ENCODE measurements at regions of chr1 and their contacts with region 1.

Region 1: GRCh38 chr1:115706587-115707425 is 61.7 kb downstream of the CASQ2 start:
- DNase-seq: no peak
- ATAC-seq: peak; percentile 88
- H3K4me3 Mint-ChIP-seq: no peak overlapping the region
- H3K27ac Mint-ChIP-seq: no peak overlapping the region
- H3K4me1 Mint-ChIP-seq: no peaks in the 10 kb centered on the region; the same call in 1 of the 2 replicates
- H3K27me3 Mint-ChIP-seq: no peaks in the 10 kb centered on the region
- CTCF ChIP-seq: peak; percentile 75

Region 2: DNA sequence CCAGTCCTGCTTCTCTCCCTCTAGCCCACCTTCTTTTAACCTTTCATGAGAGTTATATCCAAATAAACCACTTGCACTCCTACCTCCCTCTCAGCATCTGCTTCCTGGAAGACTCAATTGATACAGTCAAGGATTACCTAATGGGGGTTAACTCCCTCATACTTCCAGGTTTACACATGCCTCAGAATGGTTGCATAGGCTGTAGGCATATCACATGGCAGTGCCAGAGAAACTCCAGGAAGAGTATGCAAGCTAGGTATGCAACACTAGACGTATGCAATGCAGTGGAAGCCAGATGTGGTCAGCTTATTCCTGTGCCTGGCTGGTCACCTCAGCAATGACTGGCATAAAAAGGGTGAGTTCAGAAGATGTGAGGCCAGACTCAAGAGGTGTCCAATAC is 97.8 kb before region 1 on chr1:
- CTCF ChIA-PET with region 1: interaction called, 92 read pairs
- POLR2A ChIA-PET with region 1: no interaction called
- DNase-seq: no peak
- ATAC-seq: no peak
- H3K4me3 Mint-ChIP-seq: no peak overlapping the region
- H3K27ac Mint-ChIP-seq: no peak overlapping the region
- H3K4me1 Mint-ChIP-seq: peaks cover 6% of the 10 kb centered on the region
- H3K27me3 Mint-ChIP-seq: no peaks in the 10 kb centered on the region
- CTCF ChIP-seq: no peak

Region 3: DNA sequence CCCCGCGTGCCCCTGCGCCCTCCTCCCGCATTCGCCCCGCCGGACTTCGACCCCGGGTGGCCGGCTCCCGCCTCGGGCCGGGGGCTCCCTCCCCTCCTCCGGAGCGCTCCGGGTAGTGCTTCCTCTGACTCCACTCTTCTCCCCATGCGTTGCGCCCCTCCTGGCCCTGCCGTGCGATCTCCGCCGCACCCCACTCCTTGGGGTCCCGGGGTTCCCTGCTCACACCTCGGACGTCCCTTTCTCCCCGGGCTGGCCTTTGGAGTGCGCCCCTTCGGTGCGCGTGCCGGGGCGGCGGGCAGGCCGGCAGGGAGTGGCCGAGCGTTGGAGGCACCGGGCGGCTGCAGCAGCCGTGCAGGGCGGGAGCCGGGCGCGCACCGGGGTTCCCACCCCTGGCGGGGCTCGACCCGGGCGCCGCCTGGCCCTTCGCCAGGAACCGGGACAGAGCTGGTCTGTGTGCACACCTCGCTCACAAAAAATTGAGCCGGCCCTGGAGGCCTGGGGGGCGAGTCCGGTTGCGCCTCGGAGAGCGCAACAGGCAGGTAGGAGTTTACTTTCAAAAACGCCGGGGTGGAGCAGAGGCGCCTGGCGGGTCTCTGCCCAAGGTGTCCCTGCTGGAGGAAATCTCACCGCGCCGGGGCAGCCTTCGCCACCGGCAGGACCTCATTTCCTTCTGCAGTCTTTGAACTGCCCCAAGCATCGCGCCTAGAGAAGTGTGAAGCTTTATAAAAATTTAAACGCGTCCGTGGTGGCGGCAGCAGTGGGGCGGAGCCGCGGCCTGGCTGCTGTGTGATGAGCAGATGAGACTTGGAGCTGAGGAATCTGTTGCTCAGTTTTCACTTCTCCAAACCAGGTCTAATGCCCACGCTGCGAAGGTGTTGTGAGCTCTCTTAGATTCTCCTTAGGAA is 64.4 kb before region 1 on chr1:
- CTCF ChIA-PET with region 1: interaction called, 28 read pairs
- POLR2A ChIA-PET with region 1: no interaction called
- DNase-seq: peak; percentile 61
- ATAC-seq: peak; percentile 36
- H3K4me3 Mint-ChIP-seq: peak overlapping the region; percentile 83
- H3K27ac Mint-ChIP-seq: peak overlapping the region; percentile 68
- H3K4me1 Mint-ChIP-seq: peaks cover 35% of the 10 kb centered on the region
- H3K27me3 Mint-ChIP-seq: peaks cover 17% of the 10 kb centered on the region
- CTCF ChIP-seq: no peak

Region 4: GRCh38 chr1:115660151-115660550 is 46.7 kb before region 1 on chr1:
- CTCF ChIA-PET with region 1: interaction called, 15 read pairs
- POLR2A ChIA-PET with region 1: no interaction called
- DNase-seq: no peak
- ATAC-seq: peak; percentile 75
- H3K4me3 Mint-ChIP-seq: no peak overlapping the region
- H3K27ac Mint-ChIP-seq: peak overlapping the region; percentile 83; the same call in 1 of the 2 replicates
- H3K4me1 Mint-ChIP-seq: peaks cover 33% of the 10 kb centered on the region
- H3K27me3 Mint-ChIP-seq: no peaks in the 10 kb centered on the region; the same call in 1 of the 2 replicates
- CTCF ChIP-seq: no peak

Region 5: DNA sequence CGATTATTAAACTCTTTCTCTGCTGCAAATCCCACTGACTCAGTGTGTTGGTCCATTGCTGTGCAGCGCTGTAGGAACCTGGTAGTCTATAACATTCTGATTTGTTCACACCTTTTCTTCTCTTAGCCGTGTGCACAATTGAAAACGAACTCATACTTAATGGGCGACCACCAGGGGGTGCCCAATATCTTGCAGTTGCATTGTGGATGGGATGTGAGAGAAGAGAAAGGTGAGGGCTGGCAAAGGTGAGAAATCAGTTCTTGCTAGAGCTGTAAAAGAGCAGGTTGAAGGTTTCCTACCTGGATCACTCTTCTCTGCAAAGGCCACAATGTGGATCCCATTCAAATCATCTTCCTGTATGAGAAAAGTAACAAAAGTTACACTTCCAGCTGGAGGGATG is 10.7 kb after region 1 on chr1:
- CTCF ChIA-PET with region 1: interaction called, 68 read pairs
- POLR2A ChIA-PET with region 1: no interaction called
- DNase-seq: peak; percentile 77
- ATAC-seq: peak; percentile 53
- H3K4me3 Mint-ChIP-seq: no peak overlapping the region
- H3K27ac Mint-ChIP-seq: no peak overlapping the region
- H3K4me1 Mint-ChIP-seq: peaks cover 23% of the 10 kb centered on the region
- H3K27me3 Mint-ChIP-seq: peaks cover 3% of the 10 kb centered on the region; the same call in 1 of the 2 replicates
- CTCF ChIP-seq: peak; percentile 66

Region 6: DNA sequence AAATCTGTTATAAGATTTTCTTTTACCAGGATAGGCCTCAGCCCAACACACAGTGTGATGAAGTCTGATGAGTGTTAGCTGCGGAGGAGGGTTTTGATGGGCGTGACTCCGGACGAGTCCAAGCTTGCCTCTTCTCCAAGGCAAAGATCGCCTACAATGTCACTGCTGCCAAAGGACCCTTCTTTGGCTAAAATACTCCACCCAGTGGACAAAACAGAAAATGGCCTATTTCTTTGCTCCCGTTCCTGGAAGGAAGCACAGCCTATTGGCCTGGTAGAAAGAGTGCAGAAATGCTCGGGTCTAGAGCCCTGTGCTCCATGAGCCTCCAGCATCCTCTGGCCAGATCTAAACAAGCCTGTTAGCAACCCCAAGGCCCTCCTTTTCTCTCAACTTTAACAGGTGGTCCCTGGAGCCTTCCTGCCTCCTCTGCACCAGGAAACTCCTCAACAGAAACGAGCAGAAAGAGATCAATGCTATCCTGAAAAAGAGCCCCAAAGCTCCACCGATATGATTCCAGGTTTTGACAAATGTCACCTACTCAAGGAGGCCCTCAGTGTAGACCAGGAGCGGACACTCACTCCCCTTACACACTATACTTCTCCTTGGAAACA is 65.1 kb after region 1 on chr1:
- CTCF ChIA-PET with region 1: interaction called, 88 read pairs
- POLR2A ChIA-PET with region 1: no interaction called
- DNase-seq: peak; percentile 48
- ATAC-seq: peak; percentile 95
- H3K4me3 Mint-ChIP-seq: peak overlapping the region; percentile 29
- H3K27ac Mint-ChIP-seq: no peak overlapping the region
- H3K4me1 Mint-ChIP-seq: peaks cover 7% of the 10 kb centered on the region
- H3K27me3 Mint-ChIP-seq: no peaks in the 10 kb centered on the region
- CTCF ChIP-seq: peak; percentile 48

Region 7: GRCh38 chr1:115879977-115880376 is 173.2 kb after region 1 on chr1:
- CTCF ChIA-PET with region 1: no interaction called
- POLR2A ChIA-PET with region 1: no interaction called
- DNase-seq: peak; percentile 20
- ATAC-seq: peak; percentile 38
- H3K4me3 Mint-ChIP-seq: no peak overlapping the region
- H3K27ac Mint-ChIP-seq: no peak overlapping the region
- H3K4me1 Mint-ChIP-seq: peaks cover 40% of the 10 kb centered on the region
- H3K27me3 Mint-ChIP-seq: no peaks in the 10 kb centered on the region
- CTCF ChIP-seq: no peak